HAP-1 (cell line): ENCODE measurements at regions of chr12 and their contacts with region 1.

Region 1: DNA sequence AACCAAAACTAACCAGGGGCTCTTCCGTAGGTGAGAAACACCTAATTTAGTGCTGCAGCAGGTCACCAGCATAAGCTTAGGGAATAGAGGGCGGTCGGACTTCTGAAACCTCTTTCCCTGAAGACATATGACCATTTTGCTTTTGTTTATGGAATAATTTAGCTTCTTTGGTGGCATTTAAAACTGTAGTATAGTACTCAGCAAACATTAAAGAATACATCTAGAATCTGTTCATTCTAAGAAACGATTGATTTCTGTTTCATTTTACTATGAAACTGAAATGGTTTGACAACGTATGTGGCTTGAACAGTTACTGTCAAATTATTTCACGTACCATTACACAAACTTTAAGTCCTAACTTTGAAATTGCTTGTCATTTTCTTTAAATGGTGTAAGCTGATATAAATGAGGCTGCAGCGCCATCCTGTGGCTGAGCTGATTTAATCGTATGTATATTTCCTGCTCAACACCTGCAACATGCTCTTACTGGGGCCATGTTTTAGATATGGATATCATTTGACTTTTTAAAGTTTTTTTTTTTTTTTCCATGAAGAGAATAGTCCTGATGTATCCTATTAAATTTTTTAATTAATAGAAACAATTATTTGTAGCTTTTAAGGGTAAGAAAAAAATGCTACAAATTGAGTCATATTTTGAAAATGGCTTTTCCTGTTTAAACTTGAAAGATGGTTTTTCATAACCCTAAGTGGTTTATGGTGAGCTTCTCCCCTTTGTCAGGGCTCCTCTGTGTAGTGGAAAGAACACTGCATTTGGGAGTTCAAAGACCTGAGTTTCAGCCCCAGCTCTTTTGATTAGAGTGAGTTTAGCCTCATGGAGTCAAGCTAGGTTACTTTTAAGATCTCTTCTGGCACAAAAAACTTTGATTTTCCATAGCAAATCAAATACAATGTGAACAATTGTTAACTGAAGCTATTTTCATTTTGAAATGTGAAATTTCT is 27.4 kb downstream of the CFAP54 start:
- DNase-seq: peak; percentile 59 to 85
- H3K4me3 ChIP-seq: no peak overlapping the region
- H3K4me1 ChIP-seq: peaks cover 6% of the 10 kb centered on the region
- H3K27me3 ChIP-seq: no peaks in the 10 kb centered on the region

Region 2: DNA sequence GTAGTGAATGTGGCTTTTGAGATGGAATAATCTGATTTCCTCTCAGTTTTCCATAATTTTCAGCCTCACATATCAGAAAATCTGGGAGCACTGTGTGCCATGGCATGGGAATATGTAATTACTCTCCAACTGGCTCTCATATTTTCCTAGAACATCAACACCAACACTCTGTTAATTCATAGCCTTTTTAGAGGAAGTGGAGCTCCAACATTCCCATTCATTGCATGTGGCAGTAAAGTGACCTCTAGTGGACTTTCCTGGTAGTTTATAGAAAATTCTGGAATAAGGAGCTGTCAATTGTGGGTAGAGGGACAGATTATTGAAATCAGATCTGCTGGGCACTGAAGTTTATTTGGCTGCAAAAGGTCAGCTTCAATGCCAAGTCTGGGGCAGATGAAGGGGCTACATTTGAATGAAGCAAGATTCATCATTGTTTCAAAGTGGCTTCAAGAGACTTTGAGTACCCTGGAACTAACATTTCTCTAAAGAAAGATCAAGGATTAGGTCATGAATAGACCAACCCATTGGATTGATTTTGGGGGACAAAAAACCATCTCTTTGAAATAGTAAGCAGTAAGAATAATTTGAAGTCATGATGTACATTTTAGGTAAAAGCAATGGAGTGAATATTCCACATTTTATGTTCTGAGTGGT is 941.8 kb before region 1 on chr12:
- in situ Hi-C with region 1: loop called (anchors 25 kb)
- DNase-seq: peak in 1 of 2 experiments; percentile 65
- H3K4me3 ChIP-seq: no peak overlapping the region
- H3K4me1 ChIP-seq: no peaks in the 10 kb centered on the region
- H3K27me3 ChIP-seq: peaks cover 6% of the 10 kb centered on the region

Region 3: DNA sequence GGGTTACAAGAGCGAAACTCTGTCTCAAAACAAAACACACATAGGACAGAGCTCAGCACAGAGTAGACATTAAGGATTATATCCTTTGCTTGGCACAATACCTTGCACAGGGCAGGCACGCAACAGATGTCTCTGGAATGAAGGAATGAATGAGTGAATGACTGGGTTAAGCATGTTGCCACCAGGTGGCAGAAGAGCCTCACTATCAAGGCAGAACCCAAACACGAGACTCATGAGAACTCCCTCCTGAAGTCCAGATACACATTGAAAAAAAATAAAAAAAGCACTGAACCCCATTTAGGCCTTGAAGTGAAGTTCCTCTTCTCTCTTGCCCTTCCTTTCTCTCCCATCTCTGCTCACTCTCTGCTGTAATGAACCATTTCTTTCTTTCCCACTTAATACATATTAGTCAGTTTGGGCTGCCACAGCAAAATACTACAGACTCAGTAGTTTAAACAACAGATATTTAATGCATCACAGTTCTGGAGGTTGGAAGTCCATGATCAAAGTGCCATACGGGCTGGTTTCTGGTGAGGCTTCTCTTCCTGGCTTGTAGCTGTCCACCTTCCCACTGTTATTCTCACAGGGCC is 454.8 kb before region 1 on chr12:
- in situ Hi-C with region 1: loop called (anchors 5 kb)
- DNase-seq: peak; percentile 61 to 75
- H3K4me3 ChIP-seq: no peak overlapping the region
- H3K4me1 ChIP-seq: no peaks in the 10 kb centered on the region
- H3K27me3 ChIP-seq: no peaks in the 10 kb centered on the region

Region 4: DNA sequence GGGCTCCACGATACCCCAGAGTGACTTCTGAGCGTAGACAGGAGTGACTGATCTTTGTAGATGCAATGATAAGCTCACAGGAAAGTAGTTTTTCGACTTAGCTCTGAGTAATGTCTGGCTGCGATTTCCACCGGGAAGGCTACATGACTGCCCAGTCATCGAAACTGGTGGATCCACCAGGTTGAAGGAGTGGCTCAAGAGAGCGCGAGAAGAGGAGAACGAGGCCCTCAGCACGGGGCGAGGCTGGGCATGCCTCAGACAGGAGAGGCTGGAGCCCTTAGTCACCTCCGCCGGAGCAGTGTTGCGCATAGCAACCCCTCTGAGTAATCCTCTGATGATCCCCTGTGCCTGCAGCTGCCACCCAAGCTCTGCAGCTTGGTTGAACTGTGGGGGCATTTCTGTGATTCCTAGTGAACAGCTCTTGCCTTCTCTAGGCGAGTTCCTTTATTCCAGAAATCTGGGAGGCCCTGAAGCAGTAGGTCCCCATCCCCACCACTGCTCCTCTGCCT is 297.0 kb before region 1 on chr12:
- in situ Hi-C with region 1: loop called (anchors 10 kb)
- DNase-seq: no peak
- H3K4me3 ChIP-seq: no peak overlapping the region
- H3K4me1 ChIP-seq: peaks cover 5% of the 10 kb centered on the region
- H3K27me3 ChIP-seq: no peaks in the 10 kb centered on the region

Region 5: GRCh38 chr12:97886511-97887176 is 1369.9 kb after region 1 on chr12:
- in situ Hi-C with region 1: no loop called
- DNase-seq: no peak
- H3K4me3 ChIP-seq: no peak overlapping the region
- H3K4me1 ChIP-seq: peaks cover 6% of the 10 kb centered on the region
- H3K27me3 ChIP-seq: no peaks in the 10 kb centered on the region